ENCODE measurements at regions of chr18 and their contacts with region 1.

Region 1: GRCh38 chr18:80034068-80034851 is at the start of gene RBFA:
- DNase-seq: peak; percentile 100
- ATAC-seq: peak; percentile 98
- H3K4me3 ChIP-seq: peak within 1 kb of the TSS; percentile 83 to 94
- H3K27ac ChIP-seq: peak within 1 kb of the TSS in 1 of 2 donors; percentile 34
- H3K4me1 ChIP-seq: no peaks in the 10 kb centered on the region
- H3K27me3 ChIP-seq: no peaks in the 10 kb centered on the region
- total RNA-seq, gene RBFA: 18.1 to 22.8 TPM

Region 2: DNA sequence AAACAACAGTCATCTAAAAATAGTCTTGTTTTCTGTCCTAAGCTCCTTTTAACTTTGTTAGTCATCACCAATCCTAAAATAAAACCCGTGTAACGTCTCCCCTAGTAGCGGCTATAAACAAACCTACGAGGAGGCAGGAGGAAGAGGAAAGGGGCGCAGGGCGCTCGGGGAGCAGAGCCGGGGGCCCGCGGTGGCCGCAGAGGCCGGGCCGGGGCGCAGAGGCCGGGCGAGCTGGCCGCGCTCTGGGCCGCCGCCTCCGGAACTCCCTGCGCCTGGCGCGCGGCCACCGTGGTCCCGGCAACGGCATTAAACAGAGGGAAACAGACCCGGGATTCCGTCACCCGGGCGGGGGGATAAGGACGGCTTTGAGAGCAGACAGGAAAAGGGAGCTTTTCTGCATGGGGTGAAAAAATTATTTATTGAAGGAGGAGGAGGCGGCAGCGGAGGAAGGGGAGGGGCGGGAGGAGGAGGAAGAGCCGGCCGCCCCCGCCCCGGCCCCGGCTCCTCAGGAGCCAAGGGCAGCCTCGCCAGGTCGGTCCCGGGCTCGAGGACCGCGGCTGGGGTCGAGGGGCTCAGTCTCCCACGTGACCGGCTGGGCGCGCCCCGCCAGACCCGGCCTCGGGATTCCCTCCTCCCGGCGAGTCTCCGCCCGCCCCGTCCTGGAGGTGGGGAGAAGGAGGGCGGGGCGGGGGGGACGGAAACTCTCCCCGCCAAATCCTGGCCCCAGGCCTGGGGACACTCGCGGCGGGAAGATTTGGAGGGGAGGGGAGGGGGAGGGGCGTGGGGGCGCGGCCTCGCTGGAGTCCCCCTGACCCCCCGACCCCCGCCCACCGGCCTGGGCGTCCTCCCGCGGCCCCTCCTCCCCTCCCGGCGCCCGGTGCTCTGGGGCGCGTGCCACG is 640.4 kb before region 1 on chr18:
- intact Hi-C with region 1: loop called in 1 of 2 experiments (anchors 5 kb)
- DNase-seq: peak; percentile 95 to 97
- ATAC-seq: peak; percentile 80
- H3K4me3 ChIP-seq: peak overlapping the region; percentile 34 to 81
- H3K27ac ChIP-seq: peak overlapping the region; percentile 97 to 99
- H3K4me1 ChIP-seq: no peaks in the 10 kb centered on the region
- H3K27me3 ChIP-seq: no peaks in the 10 kb centered on the region

Region 3: GRCh38 chr18:79951578-79952455 is 82.4 kb before region 1 on chr18 and contains the start of gene SLC66A2:
- intact Hi-C with region 1: loop called in 1 of 2 experiments (anchors 5 kb)
- DNase-seq: peak; percentile 95 to 99
- ATAC-seq: peak; percentile 96
- H3K4me3 ChIP-seq: peak within 1 kb of the TSS; percentile 85 to 95
- H3K27ac ChIP-seq: no peak within 1 kb of the TSS
- H3K4me1 ChIP-seq: peaks cover 0 to 3% of the 10 kb centered on the region in 2 donors
- H3K27me3 ChIP-seq: no peaks in the 10 kb centered on the region
- total RNA-seq, gene SLC66A2: 40.1 to 47.7 TPM

Region 4: DNA sequence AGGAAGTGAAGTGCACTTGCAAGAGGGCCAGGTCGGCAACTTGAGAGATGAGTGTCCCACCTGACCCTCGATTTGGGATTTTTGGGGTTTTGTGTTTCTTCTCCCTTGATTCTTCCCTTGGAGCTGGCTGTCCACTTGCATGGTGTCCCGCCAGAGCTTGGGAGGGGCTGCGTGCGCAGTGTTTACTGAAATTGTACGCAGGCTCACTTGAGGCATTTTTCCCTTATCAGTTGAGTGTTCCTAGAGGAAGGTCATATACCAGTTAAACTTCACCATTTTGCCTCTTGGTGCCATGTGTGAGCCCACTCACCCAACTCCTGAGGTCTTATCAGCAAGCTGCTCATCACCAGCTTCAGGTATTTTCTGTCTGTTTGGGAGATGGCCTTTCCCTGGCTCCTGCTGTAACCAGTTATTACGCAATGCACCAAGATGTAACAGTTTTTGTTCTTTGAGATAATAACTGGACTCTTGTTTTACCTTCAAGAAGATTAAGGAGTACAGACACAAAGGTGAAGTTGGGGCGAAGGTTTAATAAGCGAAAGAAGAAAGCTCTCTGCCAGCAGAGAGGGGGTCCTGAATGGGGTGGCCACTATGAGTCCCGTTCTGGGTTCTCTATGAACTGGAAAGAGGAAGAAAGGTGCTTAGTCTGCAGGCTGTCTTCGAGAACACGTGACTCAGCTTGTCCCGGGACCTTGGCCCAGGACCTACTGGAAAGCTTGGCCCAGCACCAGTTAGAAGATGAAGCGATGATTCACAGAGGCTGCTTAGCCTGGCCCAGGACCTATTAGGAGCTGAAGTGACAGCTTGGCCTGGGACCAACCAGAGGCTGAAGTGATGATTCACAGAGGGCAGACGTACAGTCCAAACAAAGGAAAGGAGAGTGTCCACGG is 24.4 kb before region 1 on chr18:
- intact Hi-C with region 1: loop called in 1 of 2 experiments (anchors 1 kb)
- DNase-seq: peak; percentile 87 to 89
- ATAC-seq: peak; percentile 87
- H3K4me3 ChIP-seq: no peak overlapping the region
- H3K27ac ChIP-seq: peak overlapping the region in 1 of 2 donors; percentile 34
- H3K4me1 ChIP-seq: no peaks in the 10 kb centered on the region
- H3K27me3 ChIP-seq: no peaks in the 10 kb centered on the region

Region 5: DNA sequence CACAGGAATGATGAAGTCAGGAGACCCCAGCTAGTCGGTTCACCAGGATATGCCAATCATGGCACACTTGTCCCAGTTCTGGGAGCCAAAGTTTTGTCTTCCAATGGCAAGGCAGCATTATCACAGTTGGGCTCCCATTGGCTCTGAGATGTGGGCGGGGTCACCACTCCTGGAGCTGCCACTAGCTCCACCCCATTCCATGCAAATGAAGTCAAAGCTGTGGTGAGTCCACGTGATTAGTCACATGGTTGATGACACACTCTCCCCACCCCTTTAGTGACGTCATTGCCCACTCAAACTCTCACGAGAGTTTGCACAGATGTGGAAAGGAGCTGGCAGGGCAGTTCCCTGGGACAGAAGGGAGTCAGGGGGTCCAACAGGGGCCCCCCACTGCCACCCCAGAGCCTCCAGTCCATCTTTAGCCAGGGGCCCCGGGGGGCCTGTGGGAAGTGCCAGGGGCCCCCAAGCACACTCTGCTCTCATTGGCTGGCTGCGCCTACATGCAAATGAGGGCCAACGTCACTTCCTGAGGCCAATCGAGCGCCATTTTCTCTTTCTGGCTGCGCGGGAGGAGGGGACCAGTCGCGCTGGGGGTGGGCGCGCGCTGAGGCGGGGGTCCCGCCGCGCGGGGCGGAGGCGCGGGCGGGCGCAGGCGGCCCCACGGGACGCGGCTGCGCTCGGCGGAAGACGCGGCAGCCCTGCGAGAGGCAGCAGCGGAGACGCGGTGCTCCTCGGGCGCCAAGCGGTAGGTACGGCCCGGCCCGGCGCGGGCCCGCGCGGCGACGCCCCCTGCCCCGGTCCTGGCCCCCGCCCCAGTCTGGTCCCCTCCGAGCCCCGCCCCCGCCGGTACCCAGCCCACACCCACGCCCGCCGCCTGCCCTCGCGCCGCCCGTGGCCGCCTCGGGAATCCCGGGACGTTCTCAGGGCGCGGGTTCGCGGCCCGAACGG is 74.7 kb after region 1 on chr18 and contains the start of gene ADNP2:
- intact Hi-C with region 1: loop called (anchors 1 to 5 kb)
- DNase-seq: peak; percentile 88 to 90
- ATAC-seq: peak; percentile 87
- H3K4me3 ChIP-seq: peak within 1 kb of the TSS; percentile 97 to 99
- H3K27ac ChIP-seq: peak within 1 kb of the TSS; percentile 96 to 98
- H3K4me1 ChIP-seq: no peaks in the 10 kb centered on the region
- H3K27me3 ChIP-seq: no peaks in the 10 kb centered on the region
- total RNA-seq, gene ADNP2: 17.5 to 20.1 TPM

Measured in aorta (tissue), 5 donors.